PC-9 (cell line): ENCODE measurements at regions of chr9 and their contacts with region 1.

Region 1: DNA sequence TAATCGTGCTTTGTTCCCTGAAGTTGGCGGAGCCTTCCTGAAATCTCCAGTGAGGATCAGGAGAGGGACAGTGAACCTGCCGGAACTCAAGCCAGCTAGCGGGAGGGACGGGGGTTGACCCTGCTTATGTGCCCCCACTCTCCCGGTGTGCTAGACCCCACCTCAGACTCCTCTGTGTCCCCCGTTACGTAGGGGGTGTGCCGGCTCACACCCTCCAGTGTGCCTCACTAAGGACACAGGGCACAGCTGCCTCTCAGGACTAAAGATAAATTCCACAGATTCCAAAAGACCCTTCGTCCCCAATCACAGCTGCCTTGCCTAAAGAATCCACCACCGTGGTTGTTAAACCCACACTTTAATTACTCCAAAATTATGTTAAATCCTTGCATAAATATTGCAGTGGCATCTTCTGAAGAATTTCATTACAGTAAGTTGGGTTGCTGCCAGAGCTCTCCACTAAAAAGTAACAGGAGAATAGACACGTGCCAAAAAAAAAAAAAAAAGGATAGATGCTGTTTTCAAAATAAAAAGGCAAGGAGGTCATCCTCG is 73.7 kb downstream of the GTF3C4 start:
- DNase-seq: no peak
- H3K4me3 ChIP-seq: no peak overlapping the region
- H3K27ac ChIP-seq: no peak overlapping the region
- H3K4me1 ChIP-seq: no peaks in the 10 kb centered on the region
- H3K27me3 ChIP-seq: peaks cover 50% of the 10 kb centered on the region
- CTCF ChIP-seq: no peak

Region 2: GRCh38 chr9:132694157-132694556 is 49.8 kb before region 1 on chr9:
- CTCF ChIA-PET with region 1: no interaction called
- POLR2A ChIA-PET with region 1: interaction called, 30 read pairs
- intact Hi-C with region 1: no loop called
- DNase-seq: no peak
- H3K4me3 ChIP-seq: no peak overlapping the region
- H3K27ac ChIP-seq: no peak overlapping the region
- H3K4me1 ChIP-seq: no peaks in the 10 kb centered on the region
- H3K27me3 ChIP-seq: no peaks in the 10 kb centered on the region
- CTCF ChIP-seq: peak; percentile 37; the same call in 1 of the 2 replicates